ENCODE measurements at regions of chr15 and their contacts with region 1.

Region 1: DNA sequence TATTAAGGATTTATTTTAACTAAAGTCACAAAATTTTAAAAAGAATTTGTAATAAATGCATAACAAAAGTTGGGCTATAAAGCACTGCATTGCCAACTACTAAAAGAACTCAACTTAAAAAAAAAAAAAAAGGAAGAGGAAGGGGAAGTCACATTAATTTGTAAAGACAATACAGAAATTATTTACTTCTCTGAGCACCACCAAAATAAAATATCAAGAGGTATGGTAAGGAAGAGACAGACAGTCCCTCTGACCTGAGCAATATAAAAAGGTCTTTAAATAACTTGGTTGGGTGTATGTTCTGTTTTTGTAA is 83.5 kb downstream of the UACA start:
- DNase-seq: no peak
- H3K4me3 ChIP-seq: no peak overlapping the region
- CTCF ChIP-seq: no peak

Region 2: GRCh38 chr15:70690491-70691257 is 10.8 kb after region 1 on chr15:
- CTCF ChIA-PET with region 1: interaction called, 13 read pairs
- POLR2A ChIA-PET with region 1: no interaction called
- DNase-seq: no peak
- H3K4me3 ChIP-seq: no peak overlapping the region
- CTCF ChIP-seq: no peak

Region 3: DNA sequence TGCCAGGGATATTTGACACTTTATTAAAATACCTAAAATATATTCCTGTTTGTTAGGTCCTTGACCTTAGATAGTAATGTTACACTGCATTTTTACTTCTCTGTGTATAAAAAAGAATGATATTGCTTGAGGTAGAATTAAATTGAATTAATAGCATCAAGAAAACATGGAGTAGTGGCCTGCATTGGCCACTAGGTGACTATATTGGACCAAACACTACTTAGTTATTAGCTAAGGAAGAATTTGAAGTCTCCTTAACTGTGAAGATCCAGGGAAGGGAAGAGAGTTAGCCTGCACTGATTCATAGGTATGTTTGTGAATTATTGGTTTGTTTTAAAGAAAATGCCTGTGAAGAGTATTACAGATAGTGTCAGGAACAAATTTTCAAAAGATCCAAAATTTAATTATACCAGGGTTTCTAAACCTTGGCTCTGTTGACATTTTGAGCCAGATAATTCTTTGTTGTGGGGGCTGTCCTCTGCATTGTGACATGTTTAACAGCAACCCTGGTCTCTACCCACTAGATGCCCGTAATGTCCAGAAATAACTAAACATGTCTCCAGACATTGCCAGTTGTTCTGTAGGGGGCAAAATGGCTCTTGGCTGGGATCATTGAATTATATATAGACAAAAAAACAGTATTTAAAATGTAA is 331.8 kb after region 1 on chr15:
- CTCF ChIA-PET with region 1: no interaction called
- POLR2A ChIA-PET with region 1: no interaction called
- DNase-seq: peak; percentile 41
- H3K4me3 ChIP-seq: no peak overlapping the region
- CTCF ChIP-seq: peak; percentile 54

Measured in AG04449 (cell line).